Panc1 (cell line): ENCODE measurements at regions of chr14 and their contacts with region 1.

Region 1: DNA sequence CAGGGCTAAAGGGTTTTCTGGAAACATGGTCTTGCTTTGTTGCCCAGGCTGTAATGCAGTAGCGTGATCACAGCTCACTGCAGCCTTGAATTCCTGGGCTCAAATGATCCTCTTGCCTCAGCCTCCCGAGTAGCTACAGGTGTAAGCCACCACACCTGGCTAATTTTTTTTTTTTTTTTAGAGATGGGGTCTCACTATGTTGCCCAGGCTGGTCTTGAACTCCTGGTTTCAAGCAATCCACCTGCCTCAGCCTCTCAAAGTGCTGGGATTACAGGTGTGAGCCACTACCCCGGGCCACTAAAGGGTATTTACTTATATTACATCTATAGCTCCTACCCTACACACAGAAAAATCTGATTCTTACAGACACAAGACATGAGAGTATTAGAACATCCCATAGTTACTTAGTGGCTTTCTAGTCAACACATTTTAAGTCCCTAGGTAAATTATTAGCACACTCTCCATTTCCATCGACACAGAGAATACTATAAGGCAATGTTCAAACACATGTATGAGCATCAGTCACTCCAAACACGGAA is 6.2 kb upstream of the DCAF11 start:
- DNase-seq: no peak
- ATAC-seq: peak; percentile 33; the same call in 1 of the 2 replicates
- H3K4me3 ChIP-seq: no peak overlapping the region
- H3K27ac ChIP-seq: no peak overlapping the region
- H3K4me1 ChIP-seq: no peaks in the 10 kb centered on the region
- H3K27me3 ChIP-seq: no peaks in the 10 kb centered on the region
- CTCF ChIP-seq: no peak

Region 2: GRCh38 chr14:24058260-24058950 is 50.0 kb before region 1 on chr14:
- CTCF ChIA-PET with region 1: interaction called, 37 read pairs
- POLR2A ChIA-PET with region 1: no interaction called
- in situ Hi-C with region 1: no loop called
- intact Hi-C with region 1: loop called (anchors 2 kb)
- DNase-seq: peak; percentile 53
- ATAC-seq: peak; percentile 89
- H3K4me3 ChIP-seq: no peak overlapping the region
- H3K27ac ChIP-seq: no peak overlapping the region
- H3K4me1 ChIP-seq: no peaks in the 10 kb centered on the region
- H3K27me3 ChIP-seq: no peaks in the 10 kb centered on the region; the same call in 1 of the 2 replicates
- CTCF ChIP-seq: peak; percentile 83

Region 3: DNA sequence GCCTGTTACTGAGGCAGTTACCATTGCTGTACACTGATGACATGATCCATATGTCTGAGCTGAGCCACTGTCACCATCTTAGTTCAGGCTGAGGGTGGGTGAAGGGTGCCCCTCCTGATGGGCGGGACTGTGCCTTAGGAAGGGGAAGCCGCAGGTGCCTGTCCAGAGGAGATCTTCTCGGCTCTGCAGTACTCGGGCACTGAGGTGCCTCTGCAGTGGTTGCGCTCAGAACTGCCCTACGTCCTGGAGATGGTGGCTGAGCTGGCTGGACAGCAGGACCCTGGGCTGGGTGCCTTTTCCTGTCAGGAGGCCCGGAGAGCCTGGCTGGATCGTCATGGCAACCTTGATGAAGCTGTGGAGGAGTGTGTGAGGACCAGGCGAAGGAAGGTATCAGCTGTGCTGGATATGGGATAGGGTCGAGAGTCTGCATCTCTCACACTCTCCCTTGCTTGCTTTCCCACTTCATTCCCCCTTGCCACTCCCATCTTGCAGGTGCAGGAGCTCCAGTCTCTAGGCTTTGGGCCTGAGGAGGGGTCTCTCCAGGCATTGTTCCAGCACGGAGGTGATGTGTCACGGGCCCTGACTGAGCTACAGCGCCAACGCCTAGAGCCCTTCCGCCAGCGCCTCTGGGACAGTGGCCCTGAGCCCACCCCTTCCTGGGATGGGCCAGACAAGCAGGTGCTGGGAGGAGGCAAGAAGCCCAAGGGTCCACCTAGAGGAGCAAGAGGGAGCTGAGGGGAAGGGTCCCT is 42.8 kb after region 1 on chr14:
- CTCF ChIA-PET with region 1: interaction called, 15 read pairs
- POLR2A ChIA-PET with region 1: interaction called, 9 read pairs
- in situ Hi-C with region 1: no loop called
- intact Hi-C with region 1: no loop called
- DNase-seq: no peak
- ATAC-seq: no peak
- H3K4me3 ChIP-seq: no peak overlapping the region
- H3K27ac ChIP-seq: no peak overlapping the region
- H3K4me1 ChIP-seq: no peaks in the 10 kb centered on the region
- H3K27me3 ChIP-seq: no peaks in the 10 kb centered on the region
- CTCF ChIP-seq: no peak

Region 4: DNA sequence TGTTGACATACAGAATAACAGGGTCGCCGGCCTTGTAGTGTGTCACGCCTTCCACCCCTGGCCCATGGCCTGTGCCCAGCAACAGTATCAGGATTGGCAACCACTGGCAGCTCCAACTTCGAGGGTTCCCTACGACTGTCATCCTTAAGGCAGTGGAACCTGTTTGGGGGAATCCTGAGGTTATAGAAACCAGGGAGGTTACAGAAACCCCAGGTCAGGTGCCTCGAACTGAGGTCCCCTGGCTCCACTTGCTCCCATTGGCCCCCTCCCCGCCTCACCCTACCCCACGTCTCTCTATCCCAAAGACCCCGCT is 86.4 kb after region 1 on chr14:
- CTCF ChIA-PET with region 1: interaction called, 10 read pairs
- POLR2A ChIA-PET with region 1: no interaction called
- in situ Hi-C with region 1: no loop called
- intact Hi-C with region 1: no loop called
- DNase-seq: no peak
- ATAC-seq: no peak
- H3K4me3 ChIP-seq: peak overlapping the region; percentile 68 to 73
- H3K27ac ChIP-seq: peak overlapping the region; percentile 92
- H3K4me1 ChIP-seq: peaks cover 2% of the 10 kb centered on the region
- H3K27me3 ChIP-seq: no peaks in the 10 kb centered on the region
- CTCF ChIP-seq: no peak

Region 5: GRCh38 chr14:24310646-24311604 is 202.5 kb after region 1 on chr14 and contains the start of gene LTB4R:
- CTCF ChIA-PET with region 1: no interaction called
- POLR2A ChIA-PET with region 1: no interaction called
- in situ Hi-C with region 1: no loop called
- intact Hi-C with region 1: no loop called
- DNase-seq: no peak
- ATAC-seq: no peak
- H3K4me3 ChIP-seq: no peak within 1 kb of the TSS
- H3K27ac ChIP-seq: no peak within 1 kb of the TSS
- H3K4me1 ChIP-seq: no peaks in the 10 kb centered on the region
- H3K27me3 ChIP-seq: no peaks in the 10 kb centered on the region
- CTCF ChIP-seq: no peak
- total RNA-seq, gene LTB4R: 4.8 TPM

Region 6: DNA sequence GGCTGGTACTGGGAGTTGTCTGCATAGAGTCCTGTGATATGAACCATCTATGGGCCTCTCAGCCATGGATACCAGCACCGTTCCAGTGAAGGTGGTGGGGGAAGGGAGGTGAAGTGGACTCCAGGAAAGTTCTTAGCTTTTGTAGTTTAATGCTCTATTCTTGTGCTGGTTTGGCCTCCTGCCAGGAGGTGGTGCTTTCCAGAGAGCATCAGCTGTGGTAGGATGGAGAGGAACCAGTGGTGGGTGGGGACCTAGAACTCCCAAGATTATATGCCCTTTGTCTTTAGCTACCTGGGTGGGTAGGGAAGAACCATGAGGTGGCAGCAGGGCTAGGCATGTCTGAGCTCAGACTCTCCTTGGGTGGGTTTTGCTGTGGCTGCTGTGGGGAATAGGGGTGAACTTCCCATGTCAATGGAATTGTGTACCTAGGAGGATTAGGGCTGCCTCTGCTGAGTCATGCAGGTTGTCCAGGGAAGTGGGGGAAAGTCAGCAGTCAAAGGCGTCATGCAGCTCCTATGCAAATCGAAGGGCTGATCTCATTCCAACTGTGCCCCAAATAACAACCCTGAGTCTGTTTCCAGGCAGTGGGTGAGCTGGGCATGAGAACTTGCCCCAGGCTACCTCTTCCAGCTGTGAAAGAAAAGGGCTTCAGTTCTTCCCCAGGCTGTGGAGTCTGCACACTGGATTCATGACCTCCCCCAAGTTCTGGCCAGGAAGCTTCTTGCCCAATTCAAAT is 486.8 kb after region 1 on chr14:
- CTCF ChIA-PET with region 1: no interaction called
- POLR2A ChIA-PET with region 1: no interaction called
- in situ Hi-C with region 1: no loop called
- intact Hi-C with region 1: no loop called
- DNase-seq: no peak
- ATAC-seq: no peak
- H3K4me3 ChIP-seq: no peak overlapping the region
- H3K27ac ChIP-seq: no peak overlapping the region
- H3K4me1 ChIP-seq: no peaks in the 10 kb centered on the region
- H3K27me3 ChIP-seq: no peaks in the 10 kb centered on the region
- CTCF ChIP-seq: no peak